Heart left ventricle (tissue), 16 donors: ENCODE measurements at regions of chr3 and their contacts with region 1.

Region 1: GRCh38 chr3:145307272-145307671 is 853.7 kb downstream of the PLOD2 start:
- DNase-seq: no peak
- ATAC-seq: no peak
- H3K4me3 ChIP-seq: no peak overlapping the region
- H3K27ac ChIP-seq: no peak overlapping the region
- H3K4me1 ChIP-seq: no peaks in the 10 kb centered on the region
- H3K27me3 ChIP-seq: no peaks in the 10 kb centered on the region
- CTCF ChIP-seq: no peak
- POLR2A ChIP-seq: no peak

Region 2: GRCh38 chr3:145272684-145273083 is 34.6 kb before region 1 on chr3:
- intact Hi-C with region 1: no loop called
- DNase-seq: no peak
- ATAC-seq: peak; percentile 74 to 89 (median 82)
- H3K4me3 ChIP-seq: no peak overlapping the region
- H3K27ac ChIP-seq: no peak overlapping the region
- H3K4me1 ChIP-seq: no peaks in the 10 kb centered on the region
- H3K27me3 ChIP-seq: no peaks in the 10 kb centered on the region
- CTCF ChIP-seq: no peak
- POLR2A ChIP-seq: no peak

Region 3: DNA sequence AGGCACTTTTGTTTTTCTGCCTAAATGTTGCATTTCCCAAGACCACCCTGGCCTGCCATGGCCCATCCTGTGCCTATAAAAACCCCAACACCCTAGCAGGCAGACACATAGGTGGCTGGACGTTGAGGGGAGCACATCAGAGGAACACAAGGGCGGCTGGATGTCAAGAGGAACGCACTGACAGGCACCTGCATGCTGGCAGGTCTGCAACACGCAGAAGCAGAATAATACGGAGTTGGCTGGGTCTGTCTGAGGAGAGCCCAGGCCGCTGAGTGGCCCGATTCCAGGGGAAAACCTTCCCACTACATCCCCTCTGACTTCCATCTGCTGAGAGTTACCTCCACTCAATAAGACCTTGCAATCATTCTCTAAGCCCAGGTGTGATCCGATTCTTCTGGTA is 88.1 kb after region 1 on chr3:
- intact Hi-C with region 1: no loop called
- DNase-seq: no peak
- ATAC-seq: no peak
- H3K4me3 ChIP-seq: no peak overlapping the region
- H3K27ac ChIP-seq: no peak overlapping the region
- H3K4me1 ChIP-seq: no peaks in the 10 kb centered on the region
- H3K27me3 ChIP-seq: no peaks in the 10 kb centered on the region
- CTCF ChIP-seq: no peak
- POLR2A ChIP-seq: no peak

Region 4: GRCh38 chr3:145857956-145858355 is 550.7 kb after region 1 on chr3:
- intact Hi-C with region 1: loop called in 1 of 10 experiments (anchors 10 kb)
- DNase-seq: no peak
- ATAC-seq: no peak
- H3K4me3 ChIP-seq: no peak overlapping the region
- H3K27ac ChIP-seq: no peak overlapping the region
- H3K4me1 ChIP-seq: no peaks in the 10 kb centered on the region
- H3K27me3 ChIP-seq: no peaks in the 10 kb centered on the region
- CTCF ChIP-seq: no peak
- POLR2A ChIP-seq: no peak